Endothelial cell of umbilical vein (primary cell): ENCODE measurements at regions of chr3 and their contacts with region 1.

Region 1: DNA sequence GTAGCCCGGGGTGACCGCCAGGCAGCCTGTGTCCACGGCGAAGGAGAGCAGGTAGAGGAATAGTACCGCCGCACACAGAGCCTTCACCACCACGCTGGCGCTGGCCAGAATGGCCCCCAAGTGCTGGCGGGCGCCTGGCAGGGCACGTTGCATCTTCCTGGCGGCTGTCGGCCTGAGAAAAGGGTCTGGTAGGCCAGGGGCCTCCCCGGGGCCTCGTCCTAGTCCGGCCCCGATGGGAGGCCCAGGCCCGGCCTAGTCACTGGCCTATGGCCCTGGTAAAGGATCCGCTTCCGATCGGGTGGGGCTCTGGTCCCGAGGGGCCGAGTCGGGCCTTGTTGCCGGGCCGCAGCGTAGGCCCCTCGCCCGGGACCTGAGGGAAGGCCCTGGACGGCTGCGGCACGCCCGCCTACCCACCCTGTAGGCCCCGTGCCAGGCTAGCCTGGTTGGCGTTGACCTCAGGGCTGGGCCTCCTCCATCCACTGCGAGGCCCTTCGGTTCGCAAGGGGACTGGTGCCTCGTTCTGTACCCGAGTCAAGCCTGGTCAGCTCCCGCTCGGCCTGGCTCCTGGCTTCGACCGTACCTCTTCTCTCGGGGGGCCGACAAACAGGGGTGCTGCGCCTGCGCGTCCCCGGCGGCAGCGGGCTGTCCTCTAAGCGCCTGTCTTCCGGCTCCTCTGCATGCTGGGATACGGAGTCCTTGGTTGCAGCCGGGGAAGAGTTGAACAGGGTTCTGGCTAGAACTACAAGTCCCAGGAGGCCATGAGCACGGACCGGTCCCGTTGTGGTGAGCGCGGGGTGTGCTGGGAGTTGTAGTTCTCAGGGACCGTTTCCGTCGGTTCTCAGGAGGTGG is at the start of gene TMEM115:
- DNase-seq: peak; percentile 98
- H3K4me3 ChIP-seq: peak within 1 kb of the TSS; percentile 26 to 83 (median 63)
- H3K27ac ChIP-seq: peak within 1 kb of the TSS; percentile 52
- H3K4me1 ChIP-seq: peaks cover 31% of the 10 kb centered on the region
- H3K27me3 ChIP-seq: no peaks in the 10 kb centered on the region
- CTCF ChIP-seq: no peak
- POLR2A ChIP-seq: peak; percentile 85
- total RNA-seq, gene TMEM115: 43.2 and 44.7 TPM in 2 replicates

Region 2: DNA sequence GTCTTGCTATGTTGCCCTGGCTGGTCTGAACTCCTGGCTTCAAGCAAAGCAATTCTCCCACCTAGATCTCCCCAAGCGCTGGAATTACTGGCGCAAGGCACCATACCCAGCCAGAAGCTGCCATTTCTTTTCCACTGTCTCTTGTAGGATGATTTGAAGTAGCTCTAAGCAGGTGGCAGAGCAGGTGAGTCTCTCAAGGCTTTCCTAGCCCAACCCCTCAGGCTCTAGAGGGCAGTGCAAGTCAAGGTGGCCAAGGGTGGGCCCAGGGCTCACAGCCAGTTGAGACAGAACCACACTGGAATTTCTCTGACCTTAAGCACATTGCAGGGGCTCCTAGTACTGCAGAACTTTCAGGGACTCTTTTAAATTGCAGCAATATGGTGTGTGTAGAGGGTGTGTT is 904.7 kb before region 1 on chr3:
- CTCF ChIA-PET with region 1: no interaction called
- POLR2A ChIA-PET with region 1: no interaction called
- dilution Hi-C with region 1: no loop called
- intact Hi-C with region 1: no loop called
- DNase-seq: no peak
- H3K4me3 ChIP-seq: no peak overlapping the region
- H3K27ac ChIP-seq: no peak overlapping the region
- H3K4me1 ChIP-seq: no peaks in the 10 kb centered on the region
- H3K27me3 ChIP-seq: no peaks in the 10 kb centered on the region
- CTCF ChIP-seq: no peak
- POLR2A ChIP-seq: no peak

Region 3: GRCh38 chr3:50298836-50299637 is 60.1 kb before region 1 on chr3 and contains the starts of genes HYAL3 and NAA80:
- CTCF ChIA-PET with region 1: no interaction called
- POLR2A ChIA-PET with region 1: no interaction called
- dilution Hi-C with region 1: no loop called
- intact Hi-C with region 1: loop called (anchors 2 kb)
- DNase-seq: peak; percentile 100
- H3K4me3 ChIP-seq: peak within 1 kb of the TSS; percentile 51 to 69 (median 64)
- H3K27ac ChIP-seq: peak within 1 kb of the TSS; percentile 70
- H3K4me1 ChIP-seq: peaks cover 25% of the 10 kb centered on the region
- H3K27me3 ChIP-seq: no peaks in the 10 kb centered on the region
- CTCF ChIP-seq: peak in 1 of 2 donors; percentile 39
- POLR2A ChIP-seq: peak; percentile 97
- total RNA-seq, gene HYAL3: 3.8 and 4.8 TPM in 2 replicates
- total RNA-seq, gene NAA80: 9.0 and 9.7 TPM in 2 replicates

Region 4: DNA sequence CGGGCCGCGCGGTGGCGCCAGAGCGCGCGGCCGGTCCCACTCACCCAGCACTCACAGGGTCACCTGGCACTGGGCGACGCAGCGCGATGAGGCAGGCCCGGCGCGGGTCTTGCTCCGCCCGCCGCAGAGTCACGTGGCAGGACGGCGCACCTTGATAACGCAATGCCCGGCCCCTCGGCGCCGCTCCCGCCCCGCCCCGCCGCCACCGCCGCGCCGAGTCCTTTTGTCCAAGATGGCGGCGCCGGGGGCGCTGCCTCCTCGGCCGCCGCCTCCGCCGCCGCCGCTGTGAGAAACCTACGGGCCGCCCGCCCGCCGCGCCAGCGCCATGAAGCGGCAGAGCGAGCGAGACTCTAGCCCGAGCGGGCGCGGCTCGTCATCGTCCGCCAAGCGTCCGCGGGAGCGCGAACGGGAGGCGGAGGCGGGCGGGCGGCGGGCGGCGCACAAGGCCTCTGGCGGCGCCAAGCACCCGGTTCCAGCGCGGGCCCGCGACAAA is 1032.0 kb after region 1 on chr3 and contains the start of gene RBM15B:
- CTCF ChIA-PET with region 1: no interaction called
- POLR2A ChIA-PET with region 1: no interaction called
- dilution Hi-C with region 1: no loop called
- intact Hi-C with region 1: loop called (anchors 5 kb)
- DNase-seq: peak; percentile 96
- H3K4me3 ChIP-seq: peak within 1 kb of the TSS; percentile 29 to 77 (median 36)
- H3K27ac ChIP-seq: peak within 1 kb of the TSS; percentile 50
- H3K4me1 ChIP-seq: peaks cover 49% of the 10 kb centered on the region
- H3K27me3 ChIP-seq: no peaks in the 10 kb centered on the region
- CTCF ChIP-seq: peak in 1 of 2 donors; percentile 91
- POLR2A ChIP-seq: peak; percentile 75
- total RNA-seq, gene RBM15B: 38.3 and 39.1 TPM in 2 replicates